PC-3 (cell line): ENCODE measurements at regions of chr7 and their contacts with region 1.

Region 1: DNA sequence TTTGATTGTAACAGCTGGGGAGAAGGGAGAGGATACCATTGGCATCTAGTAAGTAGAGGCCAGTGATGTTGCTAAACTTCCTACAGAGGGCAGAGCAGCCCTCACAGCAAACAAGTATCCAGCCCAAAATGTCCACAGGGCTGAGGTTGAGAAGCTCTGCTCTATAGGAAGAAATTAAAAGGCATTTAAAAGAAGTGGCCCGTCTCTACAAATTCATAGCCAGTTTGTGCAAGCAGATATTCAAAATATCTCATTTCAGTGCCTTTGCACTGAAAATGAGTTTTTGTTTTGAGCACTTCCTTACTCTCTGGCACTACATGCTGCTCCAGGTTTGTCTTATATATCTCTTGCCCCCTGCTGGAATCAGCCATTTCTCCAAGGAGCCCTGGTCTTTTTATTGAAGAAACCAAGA is 330.0 kb downstream of the BBS9 start:
- DNase-seq: peak; percentile 57
- ATAC-seq: peak; percentile 100
- H3K4me3 ChIP-seq: no peak overlapping the region
- H3K27ac ChIP-seq: no peak overlapping the region
- H3K4me1 ChIP-seq: no peaks in the 10 kb centered on the region
- H3K27me3 ChIP-seq: no peaks in the 10 kb centered on the region
- CTCF ChIP-seq: peak; percentile 79

Region 2: GRCh38 chr7:33243319-33243881 is 215.9 kb before region 1 on chr7:
- CTCF ChIA-PET with region 1: no interaction called
- POLR2A ChIA-PET with region 1: no interaction called
- intact Hi-C with region 1: loop called (anchors 2 kb)
- DNase-seq: peak; percentile 63
- ATAC-seq: peak; percentile 88
- H3K4me3 ChIP-seq: no peak overlapping the region
- H3K27ac ChIP-seq: no peak overlapping the region
- H3K4me1 ChIP-seq: no peaks in the 10 kb centered on the region
- H3K27me3 ChIP-seq: no peaks in the 10 kb centered on the region
- CTCF ChIP-seq: peak; percentile 80

Region 3: GRCh38 chr7:33495207-33495606 is 35.9 kb after region 1 on chr7:
- CTCF ChIA-PET with region 1: no interaction called
- POLR2A ChIA-PET with region 1: no interaction called
- intact Hi-C with region 1: no loop called
- DNase-seq: peak; percentile 11
- ATAC-seq: peak; percentile 34
- H3K4me3 ChIP-seq: no peak overlapping the region
- H3K27ac ChIP-seq: peak overlapping the region; percentile 51
- H3K4me1 ChIP-seq: peaks cover 18% of the 10 kb centered on the region
- H3K27me3 ChIP-seq: no peaks in the 10 kb centered on the region
- CTCF ChIP-seq: no peak

Region 4: GRCh38 chr7:33591490-33592065 is 132.2 kb after region 1 on chr7:
- CTCF ChIA-PET with region 1: no interaction called
- POLR2A ChIA-PET with region 1: no interaction called
- intact Hi-C with region 1: loop called (anchors 5 kb)
- DNase-seq: peak; percentile 45
- ATAC-seq: peak; percentile 66
- H3K4me3 ChIP-seq: peak overlapping the region; percentile 5; the same call in 1 of the 2 replicates
- H3K27ac ChIP-seq: peak overlapping the region; percentile 93
- H3K4me1 ChIP-seq: peaks cover 30% of the 10 kb centered on the region
- H3K27me3 ChIP-seq: no peaks in the 10 kb centered on the region
- CTCF ChIP-seq: no peak

Region 5: DNA sequence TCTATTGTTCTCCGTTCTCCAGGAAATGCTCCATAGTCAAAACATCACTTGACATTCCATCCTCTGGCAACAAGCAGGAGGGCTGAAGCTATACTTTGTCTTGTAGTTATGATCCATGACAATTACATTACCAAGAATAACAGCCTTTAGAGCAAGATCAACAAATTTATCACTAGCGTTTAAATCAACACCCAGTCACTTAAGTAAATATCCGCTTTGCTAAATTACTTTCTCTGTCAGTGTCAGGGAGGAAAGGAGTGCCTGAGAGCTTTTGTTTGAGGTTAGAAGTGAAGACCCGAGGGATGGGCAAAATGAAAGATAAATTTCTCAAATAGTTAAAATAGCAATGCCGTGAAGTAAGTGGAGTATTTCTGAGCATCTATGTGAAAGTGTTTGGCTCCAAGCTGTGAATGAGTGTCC is 209.9 kb after region 1 on chr7:
- CTCF ChIA-PET with region 1: no interaction called
- POLR2A ChIA-PET with region 1: no interaction called
- intact Hi-C with region 1: loop called (anchors 5 kb)
- DNase-seq: peak; percentile 77
- ATAC-seq: peak; percentile 90
- H3K4me3 ChIP-seq: peak overlapping the region; percentile 3; the same call in 1 of the 2 replicates
- H3K27ac ChIP-seq: peak overlapping the region; percentile 64
- H3K4me1 ChIP-seq: peaks cover 24% of the 10 kb centered on the region
- H3K27me3 ChIP-seq: no peaks in the 10 kb centered on the region
- CTCF ChIP-seq: no peak

Region 6: DNA sequence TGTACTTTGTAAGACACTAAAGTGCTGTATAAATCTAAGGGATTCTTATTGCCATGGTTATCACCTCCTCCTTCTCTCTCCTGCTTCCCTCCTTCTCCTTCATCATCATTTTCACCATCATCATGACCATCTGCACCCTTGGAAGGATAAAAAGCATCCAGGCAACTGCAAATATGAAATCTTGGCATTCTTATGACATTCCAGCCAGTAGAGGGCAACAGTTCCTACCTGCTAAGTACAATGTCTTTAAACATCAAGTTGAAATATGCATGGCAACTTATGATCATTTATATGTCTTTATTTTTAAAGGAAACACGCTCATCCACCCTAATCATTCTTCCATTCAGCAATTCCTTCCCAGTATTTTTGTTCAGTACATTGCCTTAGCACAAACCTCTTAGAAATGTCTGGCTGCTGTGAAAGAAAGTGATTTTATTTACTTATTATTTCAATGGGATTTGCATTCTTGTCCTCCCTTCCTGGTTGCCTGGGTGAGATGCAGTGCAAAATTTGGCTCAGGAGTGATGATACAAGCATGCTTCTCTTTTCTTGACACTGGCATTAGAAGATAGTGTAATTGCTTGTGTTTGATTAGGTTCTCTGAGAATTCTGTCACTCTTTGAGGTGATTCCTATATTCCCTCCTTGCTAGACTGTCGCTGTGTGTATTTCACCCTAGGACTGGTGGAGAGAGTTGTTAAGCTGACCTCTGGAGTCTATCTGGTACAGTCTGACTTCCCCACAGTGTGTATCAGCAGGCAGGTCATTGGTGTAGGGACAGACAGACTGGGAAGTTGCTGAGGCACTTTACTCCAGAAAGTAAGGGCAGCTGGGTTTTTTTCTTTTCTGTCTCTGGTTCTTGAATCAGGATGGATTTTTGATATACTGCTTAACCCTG is 257.5 kb after region 1 on chr7:
- CTCF ChIA-PET with region 1: interaction called, 3 read pairs
- POLR2A ChIA-PET with region 1: no interaction called
- intact Hi-C with region 1: loop called (anchors 1 kb)
- DNase-seq: peak; percentile 78
- ATAC-seq: peak; percentile 58
- H3K4me3 ChIP-seq: no peak overlapping the region
- H3K27ac ChIP-seq: no peak overlapping the region
- H3K4me1 ChIP-seq: peaks cover under 1% of the 10 kb centered on the region; the same call in 1 of the 2 replicates
- H3K27me3 ChIP-seq: no peaks in the 10 kb centered on the region
- CTCF ChIP-seq: peak; percentile 85

Region 7: DNA sequence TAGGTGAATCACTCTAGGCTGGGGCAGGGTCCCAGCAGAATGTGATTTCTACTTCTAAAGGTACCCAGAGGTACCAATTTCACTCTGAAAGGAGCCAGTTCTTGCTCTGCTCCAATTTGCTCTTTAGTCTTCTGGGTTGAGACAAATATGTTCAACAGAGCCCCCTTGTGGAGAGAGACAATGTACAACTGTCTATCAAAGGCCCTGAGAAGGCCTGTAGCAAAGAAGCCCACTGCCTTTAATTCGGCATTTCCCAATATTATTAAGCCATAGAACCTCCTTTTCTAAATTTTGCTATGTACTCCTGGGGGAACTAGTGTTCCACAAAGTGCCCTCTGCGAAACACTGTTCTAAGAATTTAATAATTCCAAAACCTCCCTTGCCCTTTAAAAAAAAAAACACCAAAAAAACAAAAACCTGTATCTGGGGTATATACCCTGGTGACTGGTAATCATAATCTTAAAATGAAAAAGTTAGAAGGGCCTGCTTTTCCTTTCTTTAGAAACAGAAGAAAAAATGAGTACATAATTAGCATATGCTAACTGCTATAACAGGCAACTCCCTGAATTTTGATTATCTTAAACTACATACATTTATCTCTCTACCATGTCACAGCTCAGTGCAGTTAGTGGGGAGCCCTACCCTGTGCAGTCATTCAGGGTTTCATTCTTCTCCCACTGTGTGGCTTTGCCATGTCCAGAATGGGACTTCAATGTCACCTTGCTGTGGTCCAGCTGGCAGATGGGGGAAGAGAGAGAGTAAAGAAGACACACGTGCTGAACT is 285.1 kb after region 1 on chr7:
- CTCF ChIA-PET with region 1: no interaction called
- POLR2A ChIA-PET with region 1: no interaction called
- intact Hi-C with region 1: loop called (anchors 10 kb)
- DNase-seq: peak; percentile 42
- ATAC-seq: peak; percentile 45; the same call in 1 of the 2 replicates
- H3K4me3 ChIP-seq: no peak overlapping the region
- H3K27ac ChIP-seq: no peak overlapping the region
- H3K4me1 ChIP-seq: no peaks in the 10 kb centered on the region
- H3K27me3 ChIP-seq: no peaks in the 10 kb centered on the region
- CTCF ChIP-seq: peak; percentile 55

Region 8: GRCh38 chr7:33932832-33933468 is 473.6 kb after region 1 on chr7:
- CTCF ChIA-PET with region 1: interaction called, 5 read pairs
- POLR2A ChIA-PET with region 1: no interaction called
- intact Hi-C with region 1: loop called (anchors 5 kb)
- DNase-seq: peak; percentile 89
- ATAC-seq: peak; percentile 84
- H3K4me3 ChIP-seq: peak overlapping the region; percentile 48
- H3K27ac ChIP-seq: peak overlapping the region; percentile 51
- H3K4me1 ChIP-seq: peaks cover 21% of the 10 kb centered on the region
- H3K27me3 ChIP-seq: 0 out of 2 replicates have a peak, but pooled peaks cover 3% of the 10 kb centered on the region
- CTCF ChIP-seq: peak; percentile 90